IMR-90 (cell line): ENCODE measurements at regions of chr12 and their contacts with region 1.

Region 1: GRCh38 chr12:47021298-47021697 is 58.1 kb upstream of the PCED1B start:
- DNase-seq: peak; percentile 95
- ATAC-seq: peak; percentile 76
- H3K4me3 ChIP-seq: no peak overlapping the region
- H3K27ac ChIP-seq: no peak overlapping the region
- H3K4me1 ChIP-seq: peaks cover 10% of the 10 kb centered on the region
- H3K27me3 ChIP-seq: no peaks in the 10 kb centered on the region
- CTCF ChIP-seq: peak; percentile 73
- POLR2A ChIP-seq: peak; percentile 20; the same call in 1 of the 2 replicates
- RAD21 ChIP-seq: peak; percentile 84

Region 2: DNA sequence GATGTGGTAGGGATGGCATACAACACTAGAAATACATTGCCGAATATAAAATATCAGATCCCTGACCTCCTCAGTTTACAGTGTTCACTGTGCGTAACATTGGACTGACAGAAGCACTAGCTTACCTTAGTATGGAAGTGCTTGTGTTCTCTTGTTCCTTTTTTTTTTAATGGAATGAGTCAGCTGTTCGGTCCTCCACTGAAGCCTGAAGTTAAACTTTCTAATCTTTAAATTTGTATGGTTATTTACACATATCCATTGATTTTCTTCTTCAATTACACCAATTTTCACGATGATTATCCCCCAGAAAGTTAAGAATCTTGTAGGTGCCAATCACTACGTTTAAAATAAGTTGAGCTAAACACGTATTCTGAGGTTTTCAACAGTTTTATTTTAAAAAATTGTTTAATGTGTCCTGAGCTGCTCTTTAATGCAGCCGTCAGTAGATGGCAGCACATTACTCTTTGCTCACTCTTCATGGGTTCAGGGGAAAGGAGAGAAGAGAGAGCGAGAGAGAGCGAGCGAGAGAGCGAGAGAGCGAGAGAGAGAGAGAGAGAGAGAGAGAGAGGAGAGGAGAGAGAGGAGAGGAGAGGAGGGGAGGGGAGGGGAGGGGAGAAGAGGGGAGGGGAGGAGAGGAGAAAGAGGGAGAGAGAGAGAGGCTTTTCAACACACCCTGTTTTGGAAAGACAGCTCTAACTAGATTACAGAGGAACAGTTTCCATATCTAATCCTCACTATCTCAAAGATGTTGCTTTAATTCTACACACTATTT is 896.3 kb before region 1 on chr12:
- CTCF ChIA-PET with region 1: interaction called, 9 read pairs
- POLR2A ChIA-PET with region 1: no interaction called
- dilution Hi-C with region 1: no loop called
- in situ Hi-C with region 1: no loop called
- intact Hi-C with region 1: loop called (anchors 1 kb)
- DNase-seq: peak; percentile 87
- ATAC-seq: peak; percentile 95
- H3K4me3 ChIP-seq: no peak overlapping the region
- H3K27ac ChIP-seq: no peak overlapping the region
- H3K4me1 ChIP-seq: peaks cover 5% of the 10 kb centered on the region
- H3K27me3 ChIP-seq: peaks cover 11% of the 10 kb centered on the region
- CTCF ChIP-seq: peak; percentile 75
- POLR2A ChIP-seq: no peak
- RAD21 ChIP-seq: peak; percentile 68

Region 3: GRCh38 chr12:46492471-46493351 is 528.6 kb before region 1 on chr12:
- CTCF ChIA-PET with region 1: no interaction called
- POLR2A ChIA-PET with region 1: no interaction called
- dilution Hi-C with region 1: no loop called
- in situ Hi-C with region 1: no loop called
- intact Hi-C with region 1: loop called (anchors 5 kb)
- DNase-seq: peak; percentile 97
- ATAC-seq: peak; percentile 65
- H3K4me3 ChIP-seq: no peak overlapping the region
- H3K27ac ChIP-seq: peak overlapping the region; percentile 93; the same call in 1 of the 2 replicates
- H3K4me1 ChIP-seq: peaks cover 27% of the 10 kb centered on the region
- H3K27me3 ChIP-seq: no peaks in the 10 kb centered on the region
- CTCF ChIP-seq: no peak
- POLR2A ChIP-seq: no peak
- RAD21 ChIP-seq: no peak

Region 4: GRCh38 chr12:46661110-46661845 is 360.0 kb before region 1 on chr12:
- CTCF ChIA-PET with region 1: no interaction called
- POLR2A ChIA-PET with region 1: no interaction called
- dilution Hi-C with region 1: no loop called
- in situ Hi-C with region 1: no loop called
- intact Hi-C with region 1: loop called (anchors 5 kb)
- DNase-seq: peak; percentile 95
- ATAC-seq: peak; percentile 76
- H3K4me3 ChIP-seq: peak overlapping the region; percentile 14; the same call in 1 of the 2 replicates
- H3K27ac ChIP-seq: peak overlapping the region; percentile 93
- H3K4me1 ChIP-seq: peaks cover 29% of the 10 kb centered on the region
- H3K27me3 ChIP-seq: no peaks in the 10 kb centered on the region
- CTCF ChIP-seq: peak; percentile 87
- POLR2A ChIP-seq: peak; percentile 32; the same call in 1 of the 2 replicates
- RAD21 ChIP-seq: peak; percentile 84

Region 5: DNA sequence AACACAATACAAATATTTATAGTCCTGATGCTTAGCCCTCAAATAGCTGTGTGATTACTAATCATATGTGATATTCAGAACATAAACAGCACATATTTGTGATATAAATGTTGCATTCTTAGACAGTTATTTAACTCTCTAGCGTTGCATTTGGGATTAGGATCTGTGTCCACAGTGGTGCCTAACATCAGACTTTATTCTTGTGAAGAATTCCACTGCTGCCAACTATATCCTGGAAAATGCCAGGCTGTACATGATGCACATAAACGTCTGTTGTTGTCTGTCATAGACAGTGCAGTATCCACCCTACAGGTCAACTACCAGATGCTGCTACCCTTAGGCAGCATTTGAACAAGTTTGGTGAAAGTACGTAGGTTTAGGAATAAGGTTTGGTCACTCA is 234.5 kb before region 1 on chr12:
- CTCF ChIA-PET with region 1: no interaction called
- POLR2A ChIA-PET with region 1: no interaction called
- dilution Hi-C with region 1: no loop called
- in situ Hi-C with region 1: no loop called
- intact Hi-C with region 1: no loop called
- DNase-seq: peak; percentile 85
- ATAC-seq: peak; percentile 84
- H3K4me3 ChIP-seq: no peak overlapping the region
- H3K27ac ChIP-seq: peak overlapping the region; percentile 96
- H3K4me1 ChIP-seq: peaks cover 19% of the 10 kb centered on the region
- H3K27me3 ChIP-seq: no peaks in the 10 kb centered on the region
- CTCF ChIP-seq: no peak
- POLR2A ChIP-seq: no peak
- RAD21 ChIP-seq: no peak

Region 6: DNA sequence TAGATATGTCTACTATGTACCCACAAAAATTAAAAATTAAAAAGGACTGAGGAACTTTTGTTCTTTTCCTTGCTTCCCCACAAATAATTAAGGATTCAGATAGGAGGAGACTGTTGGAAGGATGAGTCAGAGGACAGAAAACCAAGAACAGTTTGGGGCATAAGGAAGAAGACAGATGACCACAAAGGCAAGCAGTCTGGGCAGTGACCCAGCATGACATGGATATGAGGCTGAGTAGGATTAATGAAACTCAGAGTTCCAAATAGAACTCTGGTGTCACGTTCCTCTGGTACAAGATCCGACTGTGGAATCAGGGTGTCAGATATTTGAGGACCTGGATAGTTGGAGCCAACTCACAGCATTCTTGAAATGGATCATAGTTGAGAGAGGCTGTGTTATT is 106.2 kb before region 1 on chr12:
- CTCF ChIA-PET with region 1: no interaction called
- POLR2A ChIA-PET with region 1: no interaction called
- dilution Hi-C with region 1: no loop called
- in situ Hi-C with region 1: no loop called
- intact Hi-C with region 1: no loop called
- DNase-seq: peak; percentile 90
- ATAC-seq: peak; percentile 83
- H3K4me3 ChIP-seq: no peak overlapping the region
- H3K27ac ChIP-seq: no peak overlapping the region
- H3K4me1 ChIP-seq: peaks cover 11% of the 10 kb centered on the region
- H3K27me3 ChIP-seq: no peaks in the 10 kb centered on the region
- CTCF ChIP-seq: no peak
- POLR2A ChIP-seq: no peak
- RAD21 ChIP-seq: no peak

Region 7: DNA sequence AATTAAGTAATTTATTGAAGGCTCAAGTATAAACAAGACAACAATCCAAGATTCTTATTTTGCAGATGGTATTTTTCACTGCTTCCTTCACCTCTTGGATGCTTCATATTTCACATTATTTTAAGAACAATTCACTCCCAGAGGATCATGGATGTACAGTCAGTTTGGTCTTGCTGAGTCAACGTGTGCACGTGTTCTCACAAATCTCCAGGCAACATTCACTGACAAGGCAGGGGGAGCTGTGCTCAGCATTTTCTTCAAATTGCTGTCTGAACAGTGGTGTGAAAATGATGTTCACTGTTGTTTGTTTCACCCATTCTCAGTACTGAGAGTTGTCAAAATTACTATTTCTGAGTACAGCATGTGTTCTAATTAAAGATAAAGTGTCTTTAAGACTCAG is 77.2 kb before region 1 on chr12:
- CTCF ChIA-PET with region 1: interaction called, 14 read pairs
- POLR2A ChIA-PET with region 1: no interaction called
- dilution Hi-C with region 1: no loop called
- in situ Hi-C with region 1: no loop called
- intact Hi-C with region 1: loop called (anchors 2 kb)
- DNase-seq: peak; percentile 82
- ATAC-seq: no peak
- H3K4me3 ChIP-seq: no peak overlapping the region
- H3K27ac ChIP-seq: no peak overlapping the region
- H3K4me1 ChIP-seq: peaks cover 10% of the 10 kb centered on the region
- H3K27me3 ChIP-seq: no peaks in the 10 kb centered on the region
- CTCF ChIP-seq: peak; percentile 33
- POLR2A ChIP-seq: no peak
- RAD21 ChIP-seq: no peak

Region 8: DNA sequence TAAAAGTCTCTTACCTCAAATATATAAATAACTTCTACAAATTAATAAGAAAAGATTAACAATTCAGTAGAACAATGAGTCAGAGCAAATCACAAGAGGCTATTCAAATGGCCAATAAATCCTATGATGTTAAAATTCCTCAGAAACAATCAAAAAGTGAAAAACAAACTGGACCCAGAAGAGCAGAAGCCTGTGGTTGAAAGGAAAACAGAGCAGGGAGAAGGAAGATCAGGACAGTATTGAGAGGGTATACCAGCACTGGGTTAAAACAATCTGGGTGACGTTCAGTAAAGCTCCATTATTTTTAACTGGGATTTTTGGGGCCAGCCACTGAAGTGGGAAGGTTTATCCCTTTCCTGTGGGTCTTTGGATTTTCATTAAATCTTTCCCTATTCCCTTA is 18.5 kb after region 1 on chr12:
- CTCF ChIA-PET with region 1: no interaction called
- POLR2A ChIA-PET with region 1: no interaction called
- dilution Hi-C with region 1: no loop called
- in situ Hi-C with region 1: no loop called
- intact Hi-C with region 1: no loop called
- DNase-seq: no peak
- ATAC-seq: no peak
- H3K4me3 ChIP-seq: no peak overlapping the region
- H3K27ac ChIP-seq: no peak overlapping the region
- H3K4me1 ChIP-seq: peaks cover 2% of the 10 kb centered on the region; the same call in 1 of the 2 replicates
- H3K27me3 ChIP-seq: no peaks in the 10 kb centered on the region
- CTCF ChIP-seq: no peak
- POLR2A ChIP-seq: no peak
- RAD21 ChIP-seq: no peak